BJ (cell line): ENCODE measurements at regions of chr13 and their contacts with region 1.

Region 1: DNA sequence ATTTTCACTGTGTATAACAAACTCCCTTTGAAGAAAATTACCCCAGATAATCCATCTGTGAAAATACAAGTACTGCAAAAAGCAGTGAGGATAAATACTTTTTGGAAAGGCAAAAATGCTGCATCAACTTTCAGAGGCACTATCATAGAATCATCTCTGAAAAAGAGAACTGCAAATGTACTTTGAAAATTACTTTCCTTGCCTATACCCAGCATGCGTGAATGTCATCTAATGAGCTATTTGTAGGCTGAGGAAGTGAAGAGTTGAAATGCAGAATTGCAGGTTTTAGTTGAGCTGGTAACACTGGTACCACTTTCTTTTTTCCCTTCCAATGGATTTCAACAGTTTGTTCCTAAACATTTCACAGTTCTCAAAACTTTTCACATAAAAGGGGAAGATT is 196.7 kb downstream of the TBC1D4 start:
- DNase-seq: no peak
- H3K4me3 ChIP-seq: no peak overlapping the region
- H3K27me3 ChIP-seq: no peaks in the 10 kb centered on the region
- CTCF ChIP-seq: no peak

Region 2: DNA sequence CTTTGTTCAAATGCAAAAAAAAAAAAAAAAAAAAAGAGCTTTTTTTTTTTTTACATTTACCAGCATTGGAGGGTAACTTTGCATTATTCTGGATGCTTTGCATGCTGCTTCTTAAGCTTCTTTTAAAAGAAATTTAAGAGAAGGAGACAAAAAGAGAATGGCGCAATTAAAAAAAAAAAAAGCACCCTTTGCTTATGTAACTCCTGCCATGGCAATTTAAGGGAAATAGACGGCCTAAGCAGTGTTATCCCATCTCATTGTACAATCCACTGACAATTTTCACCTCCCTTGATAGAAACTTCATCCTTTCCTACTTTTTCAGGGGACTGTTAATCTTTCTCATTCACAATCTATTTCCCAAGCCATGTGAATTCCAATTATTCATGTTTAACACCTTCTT is 1471.1 kb after region 1 on chr13:
- CTCF ChIA-PET with region 1: no interaction called
- POLR2A ChIA-PET with region 1: interaction called, 14 read pairs
- DNase-seq: no peak
- H3K4me3 ChIP-seq: no peak overlapping the region
- H3K27me3 ChIP-seq: no peaks in the 10 kb centered on the region
- CTCF ChIP-seq: no peak